B cell (primary cell): ENCODE measurements at regions of chr14 and their contacts with region 1.

Region 1: GRCh38 chr14:50773632-50774541 is 57.1 kb downstream of the NIN start:
- DNase-seq: peak; percentile 48
- ATAC-seq: peak; percentile 56
- H3K4me3 ChIP-seq: no peak overlapping the region
- H3K4me3 Mint-ChIP-seq: no peak overlapping the region
- H3K27ac ChIP-seq: peak overlapping the region in 1 of 2 donors; percentile 11
- H3K27ac Mint-ChIP-seq: peak overlapping the region; percentile 17
- H3K4me1 ChIP-seq: peaks cover 13 to 16% of the 10 kb centered on the region in 2 donors
- H3K4me1 Mint-ChIP-seq: peaks cover 16% of the 10 kb centered on the region
- H3K27me3 ChIP-seq: no peaks in the 10 kb centered on the region
- H3K27me3 Mint-ChIP-seq: no peaks in the 10 kb centered on the region
- CTCF ChIP-seq: peak; percentile 87

Region 2: DNA sequence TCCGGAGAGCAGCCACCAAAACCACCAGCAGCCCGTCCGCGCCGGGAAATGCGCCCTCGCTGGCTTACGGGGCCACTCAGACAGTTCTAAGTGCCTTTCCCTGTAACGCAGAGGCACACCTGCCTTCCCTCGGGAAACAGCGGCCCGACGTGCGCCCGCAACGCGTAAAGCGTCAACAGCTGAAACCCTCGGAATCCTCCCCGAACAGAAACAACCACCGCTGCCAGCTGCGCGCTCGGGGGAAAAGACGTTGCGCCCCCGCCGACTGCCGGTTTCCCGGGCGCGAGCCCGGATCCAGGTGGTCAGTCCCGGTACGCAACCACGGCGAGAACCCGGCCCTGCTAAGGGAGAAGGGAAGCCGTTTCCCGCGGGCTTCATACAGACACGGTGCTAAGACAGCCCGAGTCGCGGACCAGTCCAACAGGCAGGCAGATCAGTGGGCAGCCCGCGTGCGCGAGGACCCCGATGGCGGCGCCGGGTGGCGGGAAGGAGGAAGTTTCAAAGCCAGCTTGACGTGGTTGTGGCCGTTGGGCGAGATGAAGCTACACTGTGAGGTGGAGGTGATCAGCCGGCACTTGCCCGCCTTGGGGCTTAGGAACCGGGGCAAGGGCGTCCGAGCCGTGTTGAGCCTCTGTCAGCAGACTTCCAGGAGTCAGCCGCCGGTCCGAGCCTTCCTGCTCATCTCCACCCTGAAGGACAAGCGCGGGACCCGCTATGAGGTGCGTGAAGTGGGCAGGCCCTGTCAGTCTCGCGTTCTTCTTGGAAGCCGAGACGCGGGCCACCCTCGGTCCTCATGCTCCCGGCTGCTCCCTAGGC is 1175.2 kb before region 1 on chr14 and contains the start of gene LRR1:
- CTCF ChIA-PET with region 1: no interaction called
- POLR2A ChIA-PET with region 1: no interaction called
- intact Hi-C with region 1: no loop called
- DNase-seq: peak; percentile 95
- ATAC-seq: peak; percentile 73
- H3K4me3 ChIP-seq: peak within 1 kb of the TSS; percentile 75 to 94 (median 80)
- H3K4me3 Mint-ChIP-seq: peak within 1 kb of the TSS; percentile 99
- H3K27ac ChIP-seq: peak within 1 kb of the TSS; percentile 92 to 97
- H3K27ac Mint-ChIP-seq: peak within 1 kb of the TSS; percentile 98
- H3K4me1 ChIP-seq: peaks cover 33 to 42% of the 10 kb centered on the region in 2 donors
- H3K4me1 Mint-ChIP-seq: peaks cover 55% of the 10 kb centered on the region
- H3K27me3 ChIP-seq: no peaks in the 10 kb centered on the region
- H3K27me3 Mint-ChIP-seq: no peaks in the 10 kb centered on the region
- CTCF ChIP-seq: no peak
- total RNA-seq, gene LRR1: 10.3 and 13.0 TPM in 2 replicates

Region 3: GRCh38 chr14:50173891-50174290 is 600.0 kb before region 1 on chr14:
- CTCF ChIA-PET with region 1: no interaction called
- POLR2A ChIA-PET with region 1: no interaction called
- intact Hi-C with region 1: no loop called
- DNase-seq: no peak
- ATAC-seq: no peak
- H3K4me3 ChIP-seq: no peak overlapping the region
- H3K4me3 Mint-ChIP-seq: no peak overlapping the region
- H3K27ac ChIP-seq: no peak overlapping the region
- H3K27ac Mint-ChIP-seq: no peak overlapping the region
- H3K4me1 ChIP-seq: no peaks in the 10 kb centered on the region
- H3K4me1 Mint-ChIP-seq: no peaks in the 10 kb centered on the region
- H3K27me3 ChIP-seq: no peaks in the 10 kb centered on the region
- H3K27me3 Mint-ChIP-seq: no peaks in the 10 kb centered on the region
- CTCF ChIP-seq: no peak

Region 4: DNA sequence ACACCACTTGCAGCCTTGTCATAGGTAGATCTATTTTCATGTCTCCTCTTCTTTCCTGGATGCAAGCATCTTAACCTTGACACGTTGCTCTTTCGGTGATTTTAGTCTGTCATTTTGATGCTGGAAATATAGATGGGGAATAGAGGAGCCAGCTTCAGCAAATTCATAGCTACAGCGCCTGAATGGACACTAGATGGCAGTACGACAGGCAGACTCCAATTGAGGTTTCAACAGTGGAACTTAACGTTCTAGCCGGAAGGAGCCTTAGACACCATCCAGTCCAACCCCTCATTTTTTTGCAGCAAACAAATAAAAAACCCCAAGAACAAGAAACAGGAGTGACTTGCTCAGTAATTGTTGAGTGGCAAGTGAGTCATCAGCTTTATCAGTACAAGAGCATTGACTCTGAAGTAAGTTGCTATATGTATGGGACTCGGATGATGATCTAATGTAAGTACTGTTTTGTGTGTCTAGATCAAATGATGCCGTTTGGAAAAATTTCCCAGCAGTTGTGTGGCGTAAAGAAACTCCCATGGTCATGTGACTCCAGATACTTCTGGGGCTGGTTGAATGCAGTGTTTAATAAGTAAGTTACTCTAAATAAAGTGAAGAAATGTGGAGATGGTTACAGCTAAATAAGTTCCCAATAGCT is 452.8 kb before region 1 on chr14:
- CTCF ChIA-PET with region 1: interaction called, 3 read pairs
- POLR2A ChIA-PET with region 1: no interaction called
- intact Hi-C with region 1: loop called (anchors 5 kb)
- DNase-seq: peak; percentile 81
- ATAC-seq: peak; percentile 94
- H3K4me3 ChIP-seq: no peak overlapping the region
- H3K4me3 Mint-ChIP-seq: no peak overlapping the region
- H3K27ac ChIP-seq: peak overlapping the region in 1 of 2 donors; percentile 64
- H3K27ac Mint-ChIP-seq: no peak overlapping the region
- H3K4me1 ChIP-seq: peaks cover 10% of the 10 kb centered on the region in 2 donors
- H3K4me1 Mint-ChIP-seq: peaks cover 17% of the 10 kb centered on the region
- H3K27me3 ChIP-seq: no peaks in the 10 kb centered on the region
- H3K27me3 Mint-ChIP-seq: no peaks in the 10 kb centered on the region
- CTCF ChIP-seq: peak; percentile 89

Region 5: DNA sequence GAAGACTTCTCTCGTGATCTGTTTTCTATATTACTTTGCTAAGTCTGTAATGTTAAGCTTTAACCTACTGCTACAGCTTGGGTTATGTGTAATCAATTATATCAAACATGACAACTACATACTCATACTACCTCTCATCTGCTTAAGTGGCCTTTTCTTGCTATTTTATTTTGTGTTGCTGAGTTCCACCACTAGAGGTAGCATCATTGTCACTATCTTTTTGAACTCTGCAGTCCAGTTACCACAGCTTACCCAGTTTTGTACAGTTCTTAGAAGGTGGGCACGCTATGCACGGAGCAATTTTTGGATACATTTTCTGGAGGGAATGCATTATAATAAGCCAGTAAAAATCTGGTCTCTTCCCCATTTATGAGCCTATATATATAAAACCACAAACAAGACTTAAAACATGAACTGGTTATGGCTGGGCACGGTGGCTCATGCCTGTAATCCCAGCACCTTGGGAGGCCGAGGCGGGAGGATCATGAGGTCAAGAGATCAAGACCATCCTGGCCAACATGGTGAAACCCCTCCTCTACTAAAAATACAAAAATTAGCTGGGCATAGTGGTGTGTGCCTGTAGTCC is 154.2 kb before region 1 on chr14:
- CTCF ChIA-PET with region 1: interaction called, 31 read pairs
- POLR2A ChIA-PET with region 1: no interaction called
- intact Hi-C with region 1: loop called (anchors 1 kb)
- DNase-seq: peak; percentile 56
- ATAC-seq: no peak
- H3K4me3 ChIP-seq: no peak overlapping the region
- H3K4me3 Mint-ChIP-seq: no peak overlapping the region
- H3K27ac ChIP-seq: no peak overlapping the region
- H3K27ac Mint-ChIP-seq: no peak overlapping the region
- H3K4me1 ChIP-seq: no peaks in the 10 kb centered on the region
- H3K4me1 Mint-ChIP-seq: peaks cover 5% of the 10 kb centered on the region
- H3K27me3 ChIP-seq: no peaks in the 10 kb centered on the region
- H3K27me3 Mint-ChIP-seq: no peaks in the 10 kb centered on the region
- CTCF ChIP-seq: peak; percentile 73

Region 6: GRCh38 chr14:50756300-50756699 is 17.6 kb before region 1 on chr14:
- CTCF ChIA-PET with region 1: interaction called, 37 read pairs
- POLR2A ChIA-PET with region 1: no interaction called
- intact Hi-C with region 1: loop called (anchors 2 kb)
- DNase-seq: peak; percentile 95
- ATAC-seq: peak; percentile 93
- H3K4me3 ChIP-seq: no peak overlapping the region
- H3K4me3 Mint-ChIP-seq: no peak overlapping the region
- H3K27ac ChIP-seq: peak overlapping the region; percentile 92 to 93
- H3K27ac Mint-ChIP-seq: no peak overlapping the region
- H3K4me1 ChIP-seq: peaks cover 15 to 21% of the 10 kb centered on the region in 2 donors
- H3K4me1 Mint-ChIP-seq: peaks cover 4% of the 10 kb centered on the region
- H3K27me3 ChIP-seq: no peaks in the 10 kb centered on the region
- H3K27me3 Mint-ChIP-seq: no peaks in the 10 kb centered on the region
- CTCF ChIP-seq: no peak

Region 7: DNA sequence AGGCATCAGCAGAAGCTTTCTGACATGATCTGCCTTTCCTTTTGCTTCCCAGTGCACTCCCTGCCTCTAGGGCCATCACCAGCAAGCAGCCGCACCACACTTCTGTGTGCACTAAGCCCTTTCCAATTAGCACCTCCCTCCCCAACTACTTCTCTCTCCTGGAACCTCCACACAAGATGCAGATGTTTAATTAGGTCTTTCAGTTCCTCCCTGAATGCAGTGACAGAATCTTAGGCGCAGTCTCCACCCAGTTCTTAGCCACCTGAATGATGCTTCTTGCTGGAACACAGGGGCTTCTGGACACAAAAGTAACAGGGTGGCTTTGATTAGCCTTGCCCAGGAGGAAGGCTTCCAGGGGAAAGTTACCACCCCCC is 24.1 kb after region 1 on chr14:
- CTCF ChIA-PET with region 1: interaction called, 165 read pairs
- POLR2A ChIA-PET with region 1: interaction called, 3 read pairs
- intact Hi-C with region 1: no loop called
- DNase-seq: peak; percentile 69
- ATAC-seq: peak; percentile 78
- H3K4me3 ChIP-seq: no peak overlapping the region
- H3K4me3 Mint-ChIP-seq: peak overlapping the region; percentile 2
- H3K27ac ChIP-seq: no peak overlapping the region
- H3K27ac Mint-ChIP-seq: peak overlapping the region; percentile 53
- H3K4me1 ChIP-seq: peaks cover 56 to 64% of the 10 kb centered on the region in 2 donors
- H3K4me1 Mint-ChIP-seq: peaks cover 74% of the 10 kb centered on the region
- H3K27me3 ChIP-seq: no peaks in the 10 kb centered on the region
- H3K27me3 Mint-ChIP-seq: no peaks in the 10 kb centered on the region
- CTCF ChIP-seq: no peak

Region 8: GRCh38 chr14:50830932-50831725 is 57.2 kb after region 1 on chr14 and contains the start of gene NIN:
- CTCF ChIA-PET with region 1: interaction called, 27 read pairs
- POLR2A ChIA-PET with region 1: interaction called, 3 read pairs
- intact Hi-C with region 1: no loop called
- DNase-seq: peak; percentile 88
- ATAC-seq: peak; percentile 83
- H3K4me3 ChIP-seq: peak within 1 kb of the TSS; percentile 70 to 90 (median 71)
- H3K4me3 Mint-ChIP-seq: peak within 1 kb of the TSS; percentile 99
- H3K27ac ChIP-seq: peak within 1 kb of the TSS; percentile 93 to 95
- H3K27ac Mint-ChIP-seq: peak within 1 kb of the TSS; percentile 99
- H3K4me1 ChIP-seq: peaks cover 49 to 60% of the 10 kb centered on the region in 2 donors
- H3K4me1 Mint-ChIP-seq: peaks cover 66% of the 10 kb centered on the region
- H3K27me3 ChIP-seq: no peaks in the 10 kb centered on the region
- H3K27me3 Mint-ChIP-seq: no peaks in the 10 kb centered on the region
- CTCF ChIP-seq: no peak
- total RNA-seq, gene NIN: 211 and 219 TPM in 2 replicates

Region 9: DNA sequence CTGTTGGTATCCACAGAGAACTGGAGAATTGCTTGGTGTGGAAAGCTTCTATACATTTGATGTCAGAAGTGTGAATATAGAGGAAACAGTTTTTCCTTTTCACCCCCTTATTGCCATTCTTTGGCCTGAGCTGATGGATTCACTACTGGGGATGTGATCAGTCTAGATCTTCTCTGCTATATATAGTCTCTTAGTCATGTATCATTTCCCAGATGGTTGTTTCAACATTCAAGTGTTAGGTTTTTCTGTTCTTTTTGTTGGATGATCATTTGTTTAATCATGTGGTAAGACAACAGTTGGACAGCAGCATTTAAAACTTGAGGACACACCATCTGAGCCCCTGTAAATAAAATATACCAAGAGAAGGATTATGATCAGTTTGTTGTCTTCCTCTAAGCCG is 495.7 kb after region 1 on chr14:
- CTCF ChIA-PET with region 1: no interaction called
- POLR2A ChIA-PET with region 1: no interaction called
- intact Hi-C with region 1: no loop called
- DNase-seq: no peak
- ATAC-seq: no peak
- H3K4me3 ChIP-seq: no peak overlapping the region
- H3K4me3 Mint-ChIP-seq: no peak overlapping the region
- H3K27ac ChIP-seq: no peak overlapping the region
- H3K27ac Mint-ChIP-seq: no peak overlapping the region
- H3K4me1 ChIP-seq: no peaks in the 10 kb centered on the region
- H3K4me1 Mint-ChIP-seq: no peaks in the 10 kb centered on the region
- H3K27me3 ChIP-seq: no peaks in the 10 kb centered on the region
- H3K27me3 Mint-ChIP-seq: no peaks in the 10 kb centered on the region
- CTCF ChIP-seq: no peak

Region 10: DNA sequence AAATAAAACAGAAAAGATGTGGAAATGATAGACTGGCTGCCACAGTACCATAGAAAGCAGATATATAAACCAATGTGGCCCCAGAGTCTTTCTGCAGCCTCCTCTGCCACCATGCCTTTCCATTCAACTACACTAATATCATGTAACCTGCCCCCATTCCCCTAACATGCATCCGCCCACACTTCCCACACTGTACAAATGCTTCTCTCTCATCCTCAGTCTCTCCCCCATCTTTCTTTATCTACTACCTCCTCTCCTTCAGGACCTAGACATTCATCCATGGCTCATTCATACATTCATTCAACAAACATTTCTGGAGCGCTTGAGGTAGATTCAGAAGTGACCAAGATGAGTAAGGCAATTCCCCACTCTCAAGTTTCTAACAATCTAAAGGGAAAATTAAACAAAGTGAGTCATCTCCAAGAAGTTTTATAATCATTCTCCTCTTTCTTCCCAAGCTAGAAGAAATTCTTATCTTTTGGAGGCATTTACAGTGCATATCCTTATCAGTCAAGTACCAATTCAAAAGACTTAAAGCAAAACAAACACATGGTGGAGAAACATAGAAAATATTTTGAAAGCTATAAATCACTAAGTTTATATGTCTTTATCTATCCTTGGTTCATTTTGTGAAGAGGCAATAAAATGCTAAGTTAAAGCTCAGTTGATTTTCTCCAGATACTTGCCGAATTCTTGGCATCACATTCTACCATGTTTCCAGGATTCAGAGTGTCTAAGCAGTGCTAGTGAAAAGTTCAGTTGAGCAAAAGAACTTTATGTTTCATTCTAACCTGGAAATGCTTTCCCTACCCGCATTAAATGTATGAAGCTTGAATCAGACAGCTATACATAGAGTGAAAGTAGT is 807.4 kb after region 1 on chr14:
- CTCF ChIA-PET with region 1: no interaction called
- POLR2A ChIA-PET with region 1: no interaction called
- intact Hi-C with region 1: no loop called
- DNase-seq: no peak
- ATAC-seq: no peak
- H3K4me3 ChIP-seq: no peak overlapping the region
- H3K4me3 Mint-ChIP-seq: no peak overlapping the region
- H3K27ac ChIP-seq: no peak overlapping the region
- H3K27ac Mint-ChIP-seq: no peak overlapping the region
- H3K4me1 ChIP-seq: no peaks in the 10 kb centered on the region
- H3K4me1 Mint-ChIP-seq: no peaks in the 10 kb centered on the region
- H3K27me3 ChIP-seq: peaks cover 0 to 4% (median 1%) of the 10 kb centered on the region in 4 experiments
- H3K27me3 Mint-ChIP-seq: peaks cover 30% of the 10 kb centered on the region
- CTCF ChIP-seq: no peak